ENCODE measurements at regions of chr1 and their contacts with region 1.

Region 1: DNA sequence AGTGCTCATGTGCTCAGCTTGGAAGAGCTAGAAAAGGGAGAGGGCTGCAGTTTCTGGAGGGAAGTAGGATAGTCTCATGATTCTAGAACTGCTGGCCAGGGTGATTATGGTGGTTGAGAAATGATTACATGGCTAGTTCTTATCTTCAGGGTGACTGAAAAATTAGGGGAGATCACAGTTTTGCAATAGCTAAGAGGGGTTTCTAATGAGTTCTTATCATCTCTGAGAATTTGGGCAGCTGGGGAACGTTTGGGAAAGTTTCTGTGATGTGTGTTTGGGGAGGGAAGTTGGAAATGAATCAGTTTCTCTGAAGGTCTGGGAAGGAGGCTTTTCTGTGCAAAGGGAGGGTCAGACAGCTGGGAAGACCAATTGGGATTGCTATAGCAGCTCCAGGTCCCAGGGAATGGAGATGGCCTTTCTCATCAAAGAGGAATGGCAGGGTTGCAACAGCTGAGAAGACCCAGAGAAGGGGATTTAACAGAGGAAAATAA is 7.6 kb upstream of the RHOU start:
- DNase-seq: no peak
- H3K4me3 ChIP-seq: no peak overlapping the region
- H3K27ac ChIP-seq: no peak overlapping the region
- H3K4me1 ChIP-seq: no peaks in the 10 kb centered on the region
- H3K27me3 ChIP-seq: no peaks in the 10 kb centered on the region
- CTCF ChIP-seq: no peak
- EP300 ChIP-seq: no peak
- POLR2A ChIP-seq: no peak

Region 2: DNA sequence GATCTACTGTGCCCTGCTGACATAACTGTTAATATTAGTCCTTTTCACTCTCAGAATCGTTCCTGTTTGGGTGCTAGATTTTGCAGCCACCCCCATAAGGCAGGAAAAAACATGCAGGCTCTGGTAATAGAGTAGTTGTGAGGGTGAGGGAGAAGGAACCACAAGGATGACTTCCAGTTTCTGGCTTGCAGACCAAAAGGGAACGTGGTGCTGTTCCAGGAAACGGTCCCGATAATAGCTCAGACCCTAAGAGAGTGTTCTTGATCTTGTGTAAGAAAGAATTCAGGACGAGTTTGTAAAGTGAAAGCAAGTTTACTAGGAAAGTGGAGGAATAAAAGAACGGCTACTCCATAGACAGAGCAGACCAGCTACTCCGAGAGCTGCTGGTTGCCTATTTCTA is 43.1 kb before region 1 on chr1:
- in situ Hi-C with region 1: no loop called
- intact Hi-C with region 1: loop called (anchors 5 kb)
- DNase-seq: no peak
- H3K4me3 ChIP-seq: no peak overlapping the region
- H3K27ac ChIP-seq: no peak overlapping the region
- H3K4me1 ChIP-seq: no peaks in the 10 kb centered on the region
- H3K27me3 ChIP-seq: peaks cover 14% of the 10 kb centered on the region
- CTCF ChIP-seq: no peak
- EP300 ChIP-seq: no peak
- POLR2A ChIP-seq: no peak

Measured in transverse colon (tissue), 4 donors.